ENCODE measurements at regions of chr18 and their contacts with region 1.

Region 1: DNA sequence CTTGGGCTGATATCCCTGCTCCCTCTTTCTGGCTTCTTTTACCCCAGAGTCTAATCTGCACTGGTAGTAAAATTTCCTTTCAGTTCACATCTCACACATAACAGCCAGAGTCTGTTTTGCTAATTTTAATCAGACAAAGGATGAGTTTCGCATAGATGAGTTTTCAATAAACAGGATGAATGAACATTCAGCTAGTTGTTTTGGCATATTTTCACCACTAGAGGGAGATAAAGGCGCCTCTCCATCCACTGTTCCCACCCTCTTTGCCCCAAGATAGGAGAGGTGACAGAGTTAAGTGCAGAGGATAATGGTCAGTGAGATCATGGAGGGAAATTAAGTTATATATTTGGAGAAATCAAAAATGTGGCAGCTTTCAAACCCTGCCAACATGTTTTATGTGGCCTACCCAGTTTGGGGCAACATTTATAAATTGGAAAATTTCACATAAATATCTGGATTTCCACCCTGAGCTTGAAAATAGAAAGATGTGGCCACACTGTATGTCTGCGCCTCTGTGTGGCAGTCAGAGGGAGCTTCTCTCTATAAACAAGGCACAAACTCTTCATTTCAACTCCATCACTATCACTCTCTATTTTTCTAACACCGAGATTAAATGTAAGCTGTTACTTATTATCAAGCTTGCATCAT is 48.5 kb upstream of the DTNA start:
- DNase-seq: no peak
- H3K4me3 ChIP-seq: no peak overlapping the region
- CTCF ChIP-seq: peak; percentile 74

Region 2: DNA sequence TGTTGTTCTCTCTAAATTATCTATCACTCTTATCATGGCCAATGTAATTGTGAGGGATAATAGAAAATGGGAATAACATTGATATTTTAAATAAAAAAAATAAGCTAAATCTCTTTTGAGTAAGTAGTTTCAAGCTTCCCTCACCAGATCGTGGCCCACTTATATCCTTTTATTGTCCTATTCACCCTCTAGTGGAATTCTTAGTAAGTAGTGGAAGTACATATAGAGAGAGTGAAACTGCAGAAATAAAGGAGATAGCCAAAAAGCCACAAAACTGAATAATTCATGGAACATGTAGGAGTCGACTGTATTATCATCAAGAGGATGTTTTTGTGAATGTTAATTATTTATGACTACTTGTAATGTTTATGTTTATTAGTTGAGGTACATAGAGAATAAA is 17.6 kb before region 1 on chr18:
- CTCF ChIA-PET with region 1: interaction called, 17 read pairs
- POLR2A ChIA-PET with region 1: no interaction called
- DNase-seq: no peak
- H3K4me3 ChIP-seq: no peak overlapping the region
- CTCF ChIP-seq: no peak

Region 3: DNA sequence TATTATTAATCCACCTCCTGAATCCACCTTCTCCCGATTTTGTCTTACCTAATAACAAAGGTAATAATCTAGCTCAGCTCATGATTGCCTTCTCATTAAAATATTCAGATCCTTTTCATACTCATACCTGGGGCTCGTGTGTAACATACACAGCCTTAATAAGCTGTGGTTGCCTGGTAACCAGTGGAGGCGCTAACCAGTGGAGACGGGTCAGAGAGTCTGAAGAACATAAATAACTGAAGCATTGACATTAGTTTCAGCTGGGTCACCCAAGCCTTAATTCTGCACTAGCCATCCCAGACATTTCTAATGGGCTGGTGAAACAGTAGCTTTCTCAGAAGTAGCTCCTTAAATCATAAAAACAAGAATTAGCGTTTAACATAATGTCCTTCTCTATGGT is 33.7 kb after region 1 on chr18:
- CTCF ChIA-PET with region 1: interaction called, 39 read pairs
- POLR2A ChIA-PET with region 1: no interaction called
- DNase-seq: no peak
- H3K4me3 ChIP-seq: no peak overlapping the region
- CTCF ChIP-seq: no peak

Region 4: GRCh38 chr18:34729264-34729663 is 67.7 kb after region 1 on chr18:
- CTCF ChIA-PET with region 1: interaction called, 20 read pairs
- POLR2A ChIA-PET with region 1: no interaction called
- DNase-seq: no peak
- H3K4me3 ChIP-seq: no peak overlapping the region
- CTCF ChIP-seq: peak; percentile 48

Region 5: DNA sequence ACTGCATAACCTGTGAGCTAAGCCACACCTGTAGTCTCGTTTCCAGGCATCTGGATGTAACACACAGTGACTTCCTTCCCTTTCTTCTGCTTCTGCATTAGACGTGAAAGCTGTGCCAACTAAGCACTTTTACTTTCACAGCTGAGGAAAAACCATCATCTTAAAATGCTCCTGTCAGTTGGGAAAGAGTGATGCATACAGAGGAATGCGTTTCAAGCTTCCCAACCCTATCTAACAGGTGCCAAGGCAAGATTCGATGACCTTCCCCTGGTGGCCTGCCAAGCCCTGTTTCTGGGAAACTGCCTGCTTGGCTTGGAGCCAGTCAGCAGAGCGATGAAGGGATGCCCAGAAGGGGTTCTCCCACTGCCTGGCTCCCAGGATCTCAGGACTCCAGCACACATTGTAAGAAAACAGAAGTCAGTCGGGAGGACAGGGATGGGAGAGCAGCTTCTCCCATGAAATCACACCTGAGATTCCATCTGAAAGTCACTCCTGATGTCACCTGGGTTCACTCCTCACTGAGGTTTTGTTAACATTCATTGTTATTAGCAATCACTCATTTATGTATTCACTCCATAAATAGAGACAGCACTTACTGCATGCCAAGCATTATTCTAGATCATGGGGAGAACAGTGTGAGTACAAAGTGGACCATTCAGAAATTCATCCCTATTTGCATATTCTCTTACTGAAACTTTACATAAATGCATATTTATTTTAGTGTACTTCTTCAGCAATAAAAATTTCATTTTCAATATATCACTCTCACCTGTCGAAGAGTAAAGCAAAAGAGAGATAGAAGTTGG is 112.6 kb after region 1 on chr18:
- CTCF ChIA-PET with region 1: interaction called, 39 read pairs
- POLR2A ChIA-PET with region 1: no interaction called
- DNase-seq: no peak
- H3K4me3 ChIP-seq: no peak overlapping the region
- CTCF ChIP-seq: no peak

Region 6: DNA sequence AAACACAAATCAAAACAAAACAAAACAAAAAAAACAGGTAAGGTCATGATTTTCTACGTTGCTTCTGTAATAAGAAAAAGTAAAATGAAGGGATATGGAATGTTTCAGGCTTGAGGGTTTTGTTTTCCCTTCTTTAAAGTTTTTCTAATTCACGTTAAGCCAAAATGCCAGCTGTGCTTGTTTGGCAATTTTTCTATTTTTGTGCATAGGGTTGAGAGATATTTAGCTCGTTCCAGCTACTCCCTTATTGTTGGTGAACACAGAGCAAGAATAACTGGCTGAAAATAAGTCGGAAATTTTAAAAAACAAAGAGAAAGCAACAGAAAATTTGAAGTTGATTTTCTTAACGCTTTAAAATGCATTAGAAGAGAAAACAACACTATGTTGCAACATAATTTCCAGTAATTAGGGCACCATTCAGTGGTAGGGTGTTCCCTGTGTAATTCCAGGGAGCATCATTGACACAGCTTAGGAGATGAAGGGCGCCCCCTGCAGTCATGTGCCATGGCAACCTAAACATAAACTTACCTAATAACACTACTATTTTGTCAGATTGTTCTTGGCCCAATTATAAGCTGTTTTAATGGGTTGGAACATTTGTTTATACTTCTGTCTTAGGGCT is 148.0 kb after region 1 on chr18:
- CTCF ChIA-PET with region 1: interaction called, 14 read pairs
- POLR2A ChIA-PET with region 1: no interaction called
- DNase-seq: no peak
- H3K4me3 ChIP-seq: no peak overlapping the region
- CTCF ChIP-seq: peak; percentile 35

Region 7: DNA sequence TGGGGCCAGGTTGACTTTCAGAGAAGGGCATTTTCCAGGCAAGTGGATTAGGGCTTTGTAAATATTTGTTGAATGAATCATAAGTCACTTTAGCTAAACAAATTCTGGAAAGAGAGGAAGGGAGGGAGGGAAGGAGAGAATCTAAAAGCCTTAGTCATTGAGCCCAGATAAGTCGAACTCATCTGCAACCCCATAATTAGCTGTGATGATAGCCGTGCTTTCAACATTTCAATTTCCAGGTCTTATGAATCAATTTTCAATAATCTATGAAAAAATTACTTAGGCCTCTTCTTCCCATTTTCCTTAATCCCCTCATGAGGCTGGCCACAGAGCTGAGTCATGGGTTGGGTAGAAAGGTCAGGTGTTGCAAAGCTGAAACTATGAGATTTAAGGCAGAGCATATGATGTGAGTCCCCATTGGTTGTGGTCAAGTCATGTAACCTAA is 267.8 kb after region 1 on chr18:
- CTCF ChIA-PET with region 1: no interaction called
- POLR2A ChIA-PET with region 1: no interaction called
- DNase-seq: no peak
- H3K4me3 ChIP-seq: no peak overlapping the region
- CTCF ChIP-seq: no peak